ENCODE measurements at regions of chr1 and their contacts with region 1.

Region 1: GRCh38 chr1:93846211-93846991 is 32.6 kb downstream of the DNTTIP2 start:
- DNase-seq: peak; percentile 40
- H3K4me3 ChIP-seq: peak overlapping the region; percentile 69
- CTCF ChIP-seq: peak; percentile 17

Region 2: GRCh38 chr1:93672069-93672468 is 174.3 kb before region 1 on chr1:
- in situ Hi-C with region 1: loop called (anchors 25 kb)
- DNase-seq: no peak
- H3K4me3 ChIP-seq: no peak overlapping the region
- CTCF ChIP-seq: no peak

Region 3: GRCh38 chr1:93888896-93889295 is 42.5 kb after region 1 on chr1:
- in situ Hi-C with region 1: no loop called
- DNase-seq: no peak
- H3K4me3 ChIP-seq: no peak overlapping the region
- CTCF ChIP-seq: no peak

Region 4: GRCh38 chr1:93909146-93910050 is 63.0 kb after region 1 on chr1 and contains the start of gene GCLM:
- in situ Hi-C with region 1: no loop called
- DNase-seq: peak; percentile 67
- H3K4me3 ChIP-seq: peak within 1 kb of the TSS; percentile 81
- CTCF ChIP-seq: peak; percentile 68